ENCODE measurements at regions of chr5 and their contacts with region 1.

Region 1: GRCh38 chr5:168528521-168529372 is at the start of gene FBLL1:
- DNase-seq: peak; percentile 16
- ATAC-seq: peak; percentile 53
- H3K4me3 ChIP-seq: peak within 1 kb of the TSS; percentile 41
- H3K27ac ChIP-seq: no peak within 1 kb of the TSS
- H3K4me1 ChIP-seq: peaks cover 2% of the 10 kb centered on the region; the same call in 1 of the 2 replicates
- H3K27me3 ChIP-seq: peaks cover 29% of the 10 kb centered on the region
- CTCF ChIP-seq: no peak
- POLR2A ChIP-seq: no peak
- RAD21 ChIP-seq: no peak
- total RNA-seq, gene FBLL1: under 0.01 and 0.18 TPM in 2 replicates

Region 2: GRCh38 chr5:168502563-168503237 is 26.0 kb before region 1 on chr5:
- CTCF ChIA-PET with region 1: no interaction called
- POLR2A ChIA-PET with region 1: interaction called, 19 read pairs
- dilution Hi-C with region 1: no loop called
- in situ Hi-C with region 1: no loop called
- intact Hi-C with region 1: no loop called
- DNase-seq: no peak
- ATAC-seq: no peak
- H3K4me3 ChIP-seq: no peak overlapping the region
- H3K27ac ChIP-seq: no peak overlapping the region
- H3K4me1 ChIP-seq: no peaks in the 10 kb centered on the region
- H3K27me3 ChIP-seq: no peaks in the 10 kb centered on the region
- CTCF ChIP-seq: no peak
- POLR2A ChIP-seq: no peak
- RAD21 ChIP-seq: no peak

Region 3: GRCh38 chr5:168513861-168514428 is 14.8 kb before region 1 on chr5:
- CTCF ChIA-PET with region 1: no interaction called
- POLR2A ChIA-PET with region 1: no interaction called
- dilution Hi-C with region 1: no loop called
- in situ Hi-C with region 1: no loop called
- intact Hi-C with region 1: no loop called
- DNase-seq: no peak
- ATAC-seq: no peak
- H3K4me3 ChIP-seq: no peak overlapping the region
- H3K27ac ChIP-seq: no peak overlapping the region
- H3K4me1 ChIP-seq: no peaks in the 10 kb centered on the region
- H3K27me3 ChIP-seq: no peaks in the 10 kb centered on the region
- CTCF ChIP-seq: no peak
- POLR2A ChIP-seq: no peak
- RAD21 ChIP-seq: no peak

Measured in IMR-90 (cell line).